Activated CD4-positive, alpha-beta T cell treated with anti-CD3 and anti-CD28 coated beads for 36 hours (primary cell): ENCODE measurements at regions of chr3 and their contacts with region 1.

Region 1: DNA sequence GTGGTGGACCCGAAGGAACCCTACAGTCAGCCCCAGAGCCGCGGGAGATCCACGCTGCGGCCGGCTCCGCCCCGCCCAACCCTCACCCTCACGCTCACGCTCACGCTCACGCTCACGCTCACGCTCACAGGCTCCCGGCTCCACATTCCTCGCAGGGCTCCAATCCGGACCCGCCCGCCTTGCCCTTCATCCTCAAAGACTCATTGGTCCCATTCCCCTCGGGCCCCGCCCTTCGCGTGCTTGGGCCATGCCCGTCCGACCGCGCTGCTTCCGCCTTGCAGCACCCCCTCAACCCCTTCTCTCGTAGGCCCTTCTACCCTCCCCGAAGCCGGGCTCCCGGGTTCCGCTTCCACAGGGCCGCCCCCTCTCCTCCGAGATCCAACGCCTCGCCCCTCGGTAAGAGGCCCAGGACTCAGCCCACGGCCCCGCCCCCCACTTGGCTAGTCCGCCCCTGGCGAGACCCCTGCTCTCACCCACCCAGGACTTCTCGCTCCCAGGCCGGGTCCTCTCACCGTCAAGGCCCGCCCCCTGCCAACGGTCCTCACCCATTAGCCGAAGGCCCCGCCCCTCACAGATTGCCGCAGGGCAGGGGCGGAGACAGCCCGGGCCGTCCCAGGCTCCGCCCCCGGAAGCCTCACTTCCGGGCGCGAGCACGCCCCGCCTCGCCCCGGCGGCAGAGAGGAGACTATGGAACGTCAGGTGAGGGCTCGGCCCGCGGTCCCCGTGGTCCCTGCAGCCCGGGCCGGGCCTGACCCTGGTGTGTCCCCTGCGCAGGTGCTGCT is at the start of gene APEH:
- DNase-seq: peak; percentile 99
- ATAC-seq: peak; percentile 91
- H3K4me3 Mint-ChIP-seq: peak within 1 kb of the TSS; percentile 88
- H3K27ac Mint-ChIP-seq: peak within 1 kb of the TSS; percentile 94
- H3K4me1 Mint-ChIP-seq: peaks cover 29% of the 10 kb centered on the region
- H3K27me3 Mint-ChIP-seq: no peaks in the 10 kb centered on the region
- total RNA-seq, gene APEH: 110 to 137 TPM

Region 2: DNA sequence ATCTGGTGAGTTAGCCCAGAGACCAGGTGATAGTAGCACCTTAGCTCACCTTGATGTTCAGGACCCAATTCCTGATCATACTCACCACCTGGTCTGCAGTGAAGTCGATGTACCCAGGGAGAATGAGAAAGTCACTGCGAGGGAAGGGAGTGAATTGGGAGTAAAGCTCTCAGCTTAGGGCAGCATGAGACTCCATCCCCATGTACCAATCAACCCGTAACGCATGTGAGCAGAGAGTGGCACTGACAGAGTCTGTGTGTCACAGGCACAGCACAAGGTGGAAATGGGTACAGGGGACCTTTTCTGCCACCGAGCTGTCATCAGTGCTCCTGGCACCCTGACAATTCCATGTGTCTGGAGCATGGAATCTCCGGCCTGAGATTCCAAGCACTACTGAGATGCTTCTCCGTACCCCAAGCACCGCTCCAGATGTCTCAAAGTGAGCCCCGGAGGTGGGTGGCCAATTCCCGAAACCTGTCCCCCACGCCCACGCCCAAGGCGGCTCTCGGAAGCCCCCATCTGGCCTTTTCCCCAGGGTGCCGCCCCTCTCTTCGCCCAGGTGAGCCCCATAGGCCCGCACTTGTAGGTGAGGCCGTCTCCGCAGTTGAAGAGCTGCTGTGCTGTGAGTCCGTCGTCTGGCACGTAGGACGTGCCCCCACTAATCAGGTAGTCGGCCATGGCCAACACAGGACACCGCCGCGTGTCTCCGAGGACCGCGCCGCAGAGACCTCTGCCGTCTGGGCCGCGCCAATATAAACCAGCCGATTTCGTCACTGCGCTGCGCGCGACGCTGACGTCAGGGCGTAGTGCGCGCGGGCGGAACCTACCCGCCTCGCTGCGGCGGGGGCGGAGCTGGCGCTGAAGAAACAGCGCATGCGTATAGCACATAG is 645.0 kb before region 1 on chr3 and contains the start of gene IMPDH2:
- CTCF ChIA-PET with region 1: no interaction called
- POLR2A ChIA-PET with region 1: no interaction called
- intact Hi-C with region 1: loop called in 1 of 2 experiments (anchors 1 kb)
- DNase-seq: peak; percentile 96
- ATAC-seq: peak; percentile 93
- H3K4me3 Mint-ChIP-seq: peak within 1 kb of the TSS; percentile 89
- H3K27ac Mint-ChIP-seq: peak within 1 kb of the TSS; percentile 97
- H3K4me1 Mint-ChIP-seq: peaks cover 53% of the 10 kb centered on the region
- H3K27me3 Mint-ChIP-seq: no peaks in the 10 kb centered on the region
- total RNA-seq, gene IMPDH2: 504 to 515 TPM

Region 3: DNA sequence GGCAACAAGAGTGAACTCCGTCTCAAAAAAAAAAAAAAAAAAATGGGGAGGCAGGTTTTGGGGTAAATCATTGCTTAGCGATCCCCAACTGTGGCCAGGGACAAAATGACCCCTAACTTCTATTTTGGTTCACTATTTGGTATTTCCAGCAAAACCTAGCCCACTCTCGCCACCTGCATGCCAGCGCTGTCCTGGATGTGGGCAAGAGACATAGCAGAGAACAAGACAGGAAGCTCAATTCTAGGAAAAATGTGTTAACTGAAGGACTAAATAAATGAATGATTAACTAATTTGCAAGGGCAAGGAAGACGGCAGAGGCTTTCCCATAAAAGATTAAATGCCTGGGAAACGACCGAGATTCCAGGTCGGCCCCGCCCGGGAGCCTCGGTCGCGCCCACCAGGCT is 245.2 kb before region 1 on chr3:
- CTCF ChIA-PET with region 1: no interaction called
- POLR2A ChIA-PET with region 1: no interaction called
- intact Hi-C with region 1: loop called in 1 of 2 experiments (anchors 1 kb)
- DNase-seq: no peak
- ATAC-seq: peak; percentile 2
- H3K4me3 Mint-ChIP-seq: peak overlapping the region; percentile 84
- H3K27ac Mint-ChIP-seq: peak overlapping the region; percentile 93
- H3K4me1 Mint-ChIP-seq: peaks cover 16% of the 10 kb centered on the region
- H3K27me3 Mint-ChIP-seq: no peaks in the 10 kb centered on the region

Region 4: GRCh38 chr3:49689046-49689907 is 15.4 kb after region 1 on chr3 and contains the starts of genes MST1 and RNF123:
- CTCF ChIA-PET with region 1: interaction called, 3 read pairs
- POLR2A ChIA-PET with region 1: no interaction called
- intact Hi-C with region 1: loop called (anchors 1 to 2 kb)
- DNase-seq: peak; percentile 95
- ATAC-seq: peak; percentile 74
- H3K4me3 Mint-ChIP-seq: peak within 1 kb of the TSS; percentile 90
- H3K27ac Mint-ChIP-seq: peak within 1 kb of the TSS; percentile 90
- H3K4me1 Mint-ChIP-seq: peaks cover 30% of the 10 kb centered on the region
- H3K27me3 Mint-ChIP-seq: no peaks in the 10 kb centered on the region
- total RNA-seq, gene MST1: 8.7 to 9.7 TPM
- total RNA-seq, gene RNF123: 25.2 to 32.7 TPM

Region 5: GRCh38 chr3:49929331-49930240 is 255.7 kb after region 1 on chr3 and contains the start of gene MON1A:
- CTCF ChIA-PET with region 1: no interaction called
- POLR2A ChIA-PET with region 1: no interaction called
- intact Hi-C with region 1: loop called in 1 of 2 experiments (anchors 1 kb)
- DNase-seq: peak; percentile 92
- ATAC-seq: peak; percentile 97
- H3K4me3 Mint-ChIP-seq: peak within 1 kb of the TSS; percentile 85
- H3K27ac Mint-ChIP-seq: peak within 1 kb of the TSS; percentile 90
- H3K4me1 Mint-ChIP-seq: peaks cover 19% of the 10 kb centered on the region
- H3K27me3 Mint-ChIP-seq: no peaks in the 10 kb centered on the region
- total RNA-seq, gene MON1A: 7.5 to 8.3 TPM

Region 6: DNA sequence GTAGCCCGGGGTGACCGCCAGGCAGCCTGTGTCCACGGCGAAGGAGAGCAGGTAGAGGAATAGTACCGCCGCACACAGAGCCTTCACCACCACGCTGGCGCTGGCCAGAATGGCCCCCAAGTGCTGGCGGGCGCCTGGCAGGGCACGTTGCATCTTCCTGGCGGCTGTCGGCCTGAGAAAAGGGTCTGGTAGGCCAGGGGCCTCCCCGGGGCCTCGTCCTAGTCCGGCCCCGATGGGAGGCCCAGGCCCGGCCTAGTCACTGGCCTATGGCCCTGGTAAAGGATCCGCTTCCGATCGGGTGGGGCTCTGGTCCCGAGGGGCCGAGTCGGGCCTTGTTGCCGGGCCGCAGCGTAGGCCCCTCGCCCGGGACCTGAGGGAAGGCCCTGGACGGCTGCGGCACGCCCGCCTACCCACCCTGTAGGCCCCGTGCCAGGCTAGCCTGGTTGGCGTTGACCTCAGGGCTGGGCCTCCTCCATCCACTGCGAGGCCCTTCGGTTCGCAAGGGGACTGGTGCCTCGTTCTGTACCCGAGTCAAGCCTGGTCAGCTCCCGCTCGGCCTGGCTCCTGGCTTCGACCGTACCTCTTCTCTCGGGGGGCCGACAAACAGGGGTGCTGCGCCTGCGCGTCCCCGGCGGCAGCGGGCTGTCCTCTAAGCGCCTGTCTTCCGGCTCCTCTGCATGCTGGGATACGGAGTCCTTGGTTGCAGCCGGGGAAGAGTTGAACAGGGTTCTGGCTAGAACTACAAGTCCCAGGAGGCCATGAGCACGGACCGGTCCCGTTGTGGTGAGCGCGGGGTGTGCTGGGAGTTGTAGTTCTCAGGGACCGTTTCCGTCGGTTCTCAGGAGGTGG is 685.2 kb after region 1 on chr3 and contains the start of gene TMEM115:
- CTCF ChIA-PET with region 1: no interaction called
- POLR2A ChIA-PET with region 1: no interaction called
- intact Hi-C with region 1: loop called in 1 of 2 experiments (anchors 1 kb)
- DNase-seq: peak; percentile 97
- ATAC-seq: peak; percentile 100
- H3K4me3 Mint-ChIP-seq: peak within 1 kb of the TSS; percentile 91
- H3K27ac Mint-ChIP-seq: peak within 1 kb of the TSS; percentile 94
- H3K4me1 Mint-ChIP-seq: peaks cover 37% of the 10 kb centered on the region
- H3K27me3 Mint-ChIP-seq: no peaks in the 10 kb centered on the region
- total RNA-seq, gene TMEM115: 13.1 to 16.1 TPM